BJ (cell line): ENCODE measurements at regions of chr13 and their contacts with region 1.

Region 1: GRCh38 chr13:97588993-97589392 is 155.0 kb downstream of the RAP2A start:
- DNase-seq: no peak
- H3K4me3 ChIP-seq: no peak overlapping the region
- H3K27me3 ChIP-seq: no peaks in the 10 kb centered on the region
- CTCF ChIP-seq: no peak

Region 2: DNA sequence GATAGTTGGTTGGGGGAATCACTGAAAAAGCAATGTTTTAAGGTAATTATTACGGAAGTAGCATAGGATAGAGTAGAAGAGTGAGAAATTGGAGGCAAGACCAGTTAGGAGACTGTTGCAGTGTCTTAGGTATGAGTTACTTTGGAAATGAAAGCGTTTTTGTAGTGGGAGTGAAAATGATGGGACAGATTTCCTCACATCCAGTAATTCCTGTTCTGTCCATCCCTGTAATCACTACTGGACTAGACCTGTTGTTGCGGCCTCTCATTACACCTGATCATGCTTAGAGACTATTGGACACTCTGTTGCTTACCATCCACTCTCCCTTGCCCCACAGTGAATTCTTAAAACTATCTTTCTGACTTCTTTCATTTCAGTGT is 139.8 kb before region 1 on chr13:
- CTCF ChIA-PET with region 1: no interaction called
- POLR2A ChIA-PET with region 1: no interaction called
- DNase-seq: no peak
- H3K4me3 ChIP-seq: no peak overlapping the region
- H3K27me3 ChIP-seq: no peaks in the 10 kb centered on the region
- CTCF ChIP-seq: no peak

Region 3: DNA sequence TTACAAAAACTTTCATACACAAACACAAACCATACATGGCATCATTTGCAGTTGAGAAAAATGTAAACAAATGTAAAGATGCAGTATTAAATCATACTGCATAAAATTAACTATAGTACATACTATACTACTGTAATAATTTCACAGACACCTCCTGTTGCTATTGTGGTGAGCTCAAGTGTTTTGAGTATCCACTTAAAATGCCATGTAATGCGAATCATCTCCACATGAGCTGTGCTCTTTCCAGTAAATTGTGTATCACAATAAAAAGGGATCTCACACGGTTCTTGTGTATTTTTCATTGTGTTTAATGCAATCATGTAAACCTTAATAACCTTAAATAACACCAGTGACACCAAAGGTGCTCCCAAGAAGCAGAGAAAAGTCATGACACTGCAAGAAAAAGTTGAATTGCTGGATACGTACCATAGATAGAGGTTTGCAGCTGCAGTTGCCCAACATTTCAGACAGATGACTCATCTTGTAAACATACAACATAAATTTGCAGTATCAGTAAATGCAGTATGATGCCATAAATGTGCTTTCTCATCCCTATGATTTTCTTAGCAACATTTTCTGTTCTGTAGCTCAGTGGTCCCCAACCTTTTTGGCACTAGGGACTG is 11.6 kb after region 1 on chr13:
- CTCF ChIA-PET with region 1: no interaction called
- POLR2A ChIA-PET with region 1: interaction called, 21 read pairs
- DNase-seq: peak; percentile 4
- H3K4me3 ChIP-seq: no peak overlapping the region
- H3K27me3 ChIP-seq: no peaks in the 10 kb centered on the region
- CTCF ChIP-seq: no peak